ENCODE measurements at regions of chr17 and their contacts with region 1.

Region 1: GRCh38 chr17:79839363-79840268 is at the start of gene CBX4:
- DNase-seq: peak; percentile 82
- H3K4me3 ChIP-seq: peak within 1 kb of the TSS; percentile 71 to 89 (median 89)
- H3K27ac ChIP-seq: no peak within 1 kb of the TSS
- H3K4me1 ChIP-seq: peaks cover 18% of the 10 kb centered on the region
- H3K27me3 ChIP-seq: peaks cover 28 to 42% of the 10 kb centered on the region in 2 experiments
- CTCF ChIP-seq: peak; percentile 56 to 63
- POLR2A ChIP-seq: peak; percentile 86
- total RNA-seq, gene CBX4: 12.3 TPM in 2 replicates

Region 2: DNA sequence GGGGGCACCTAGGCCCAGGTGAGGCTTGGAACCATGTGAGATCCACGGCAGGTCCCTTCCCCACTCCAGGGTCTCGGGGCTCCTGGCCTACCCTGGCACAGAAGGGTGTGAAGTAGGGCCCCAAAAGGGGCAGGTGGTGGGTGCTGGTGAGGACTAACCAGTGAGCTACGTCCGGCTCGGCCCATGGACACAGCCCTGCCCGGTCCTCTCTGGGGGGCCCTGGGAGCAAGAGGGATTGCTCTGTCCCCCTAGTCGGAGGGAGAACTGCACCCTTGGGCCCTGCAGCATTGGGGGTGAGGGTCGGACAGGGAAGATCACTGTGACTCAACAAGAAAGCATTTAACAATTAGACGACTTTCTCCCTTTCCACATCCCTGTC is 105.9 kb before region 1 on chr17:
- CTCF ChIA-PET with region 1: no interaction called
- POLR2A ChIA-PET with region 1: no interaction called
- dilution Hi-C with region 1: no loop called
- intact Hi-C with region 1: no loop called
- DNase-seq: no peak
- H3K4me3 ChIP-seq: no peak overlapping the region
- H3K27ac ChIP-seq: no peak overlapping the region
- H3K4me1 ChIP-seq: peaks cover 7% of the 10 kb centered on the region
- H3K27me3 ChIP-seq: no peaks in the 10 kb centered on the region
- CTCF ChIP-seq: no peak
- POLR2A ChIP-seq: no peak

Region 3: DNA sequence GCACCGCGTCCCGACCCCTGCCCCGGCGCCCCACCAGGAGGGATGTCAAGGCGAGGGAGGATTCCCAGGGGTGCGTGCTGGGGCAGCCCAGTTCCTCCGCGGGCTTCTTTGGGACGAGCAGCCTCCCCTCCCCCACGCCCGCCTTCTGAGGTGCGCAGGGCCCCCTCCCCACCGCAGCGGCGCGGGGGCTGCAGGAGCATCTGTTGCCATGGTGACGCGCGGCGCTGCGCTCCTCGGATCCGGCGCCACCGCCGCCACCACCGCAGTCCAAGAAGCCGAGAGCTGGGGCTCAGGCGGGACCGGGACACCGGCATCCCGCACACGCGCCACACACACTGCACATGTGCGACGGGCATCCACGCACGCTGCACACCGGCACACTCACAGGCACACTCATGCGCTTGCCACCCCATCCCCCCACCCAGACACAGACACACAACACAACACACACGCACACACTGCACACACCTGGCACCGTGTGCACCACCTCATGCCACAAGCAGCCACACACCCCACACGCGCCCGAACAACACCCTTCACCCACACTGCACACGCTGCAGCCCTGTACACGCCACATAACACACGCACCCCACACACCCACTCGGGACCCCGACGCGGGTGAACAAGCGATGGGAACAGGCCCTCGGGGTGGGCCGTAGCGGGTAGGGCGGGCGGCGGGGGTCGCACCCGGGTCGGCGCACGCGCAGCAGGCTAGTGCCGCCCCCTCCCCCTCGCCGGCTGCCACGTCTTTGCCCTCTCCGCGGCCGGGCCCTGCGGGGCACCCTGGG is 91.9 kb before region 1 on chr17:
- CTCF ChIA-PET with region 1: interaction called, 14 read pairs
- POLR2A ChIA-PET with region 1: no interaction called
- dilution Hi-C with region 1: no loop called
- intact Hi-C with region 1: loop called (anchors 1 kb)
- DNase-seq: no peak
- H3K4me3 ChIP-seq: no peak overlapping the region
- H3K27ac ChIP-seq: no peak overlapping the region
- H3K4me1 ChIP-seq: no peaks in the 10 kb centered on the region
- H3K27me3 ChIP-seq: peaks cover 27 to 45% of the 10 kb centered on the region in 2 experiments
- CTCF ChIP-seq: no peak
- POLR2A ChIP-seq: no peak

Region 4: GRCh38 chr17:79796763-79797491 is 42.7 kb before region 1 on chr17 and contains the start of gene CBX8:
- CTCF ChIA-PET with region 1: interaction called, 19 read pairs
- POLR2A ChIA-PET with region 1: interaction called, 6 read pairs
- dilution Hi-C with region 1: no loop called
- intact Hi-C with region 1: loop called (anchors 2 kb)
- DNase-seq: peak; percentile 99
- H3K4me3 ChIP-seq: peak within 1 kb of the TSS; percentile 41 to 79 (median 43)
- H3K27ac ChIP-seq: peak within 1 kb of the TSS; percentile 36
- H3K4me1 ChIP-seq: peaks cover 19% of the 10 kb centered on the region
- H3K27me3 ChIP-seq: peaks cover 40 to 60% of the 10 kb centered on the region in 2 experiments
- CTCF ChIP-seq: no peak
- POLR2A ChIP-seq: peak; percentile 53
- total RNA-seq, gene CBX8: 3.1 TPM in 2 replicates

Region 5: GRCh38 chr17:79818026-79818758 is 21.4 kb before region 1 on chr17:
- CTCF ChIA-PET with region 1: interaction called, 59 read pairs
- POLR2A ChIA-PET with region 1: interaction called, 6 read pairs
- dilution Hi-C with region 1: no loop called
- intact Hi-C with region 1: no loop called
- DNase-seq: no peak
- H3K4me3 ChIP-seq: no peak overlapping the region
- H3K27ac ChIP-seq: no peak overlapping the region
- H3K4me1 ChIP-seq: peaks cover 3% of the 10 kb centered on the region
- H3K27me3 ChIP-seq: peaks cover 40 to 56% of the 10 kb centered on the region in 2 experiments
- CTCF ChIP-seq: no peak
- POLR2A ChIP-seq: no peak

Region 6: DNA sequence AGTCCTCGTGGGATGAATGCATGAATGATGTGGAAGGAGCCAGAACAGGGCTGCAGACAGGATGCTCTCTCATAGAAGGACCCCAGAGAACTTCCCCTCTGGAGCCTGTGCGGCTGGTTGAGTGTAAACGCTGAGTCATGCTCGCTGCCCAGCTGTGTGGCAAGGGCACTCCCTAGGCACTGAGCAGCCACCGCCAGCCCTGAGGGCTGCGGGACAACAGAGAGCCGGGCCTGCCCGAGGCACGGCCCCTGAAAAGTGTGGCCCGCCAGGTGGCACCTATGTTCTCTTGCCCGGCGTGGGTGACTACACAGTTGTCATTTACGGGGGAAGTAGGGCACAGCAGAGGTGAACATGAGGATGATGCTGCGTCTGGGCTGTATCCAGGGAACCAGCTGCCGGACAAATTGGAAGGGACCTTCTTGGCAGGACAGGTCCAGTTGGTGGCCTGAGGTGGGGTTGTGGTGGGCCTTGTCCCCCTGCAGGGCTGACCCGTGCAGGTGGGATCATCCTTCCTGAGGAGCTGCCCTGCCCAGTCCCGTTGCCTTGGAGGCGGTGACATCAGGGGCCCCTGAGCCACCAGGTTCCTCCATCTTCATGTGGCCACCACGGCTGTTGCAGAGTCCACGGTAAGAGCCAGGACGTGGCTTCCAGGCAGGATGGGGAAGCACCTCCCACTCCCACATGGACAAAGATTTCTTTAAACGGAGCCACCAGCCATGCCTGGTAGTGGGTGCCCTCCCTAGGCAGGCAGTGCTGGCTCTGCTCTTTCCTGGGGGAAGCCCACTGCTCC is 94.4 kb after region 1 on chr17:
- CTCF ChIA-PET with region 1: interaction called, 3 read pairs
- POLR2A ChIA-PET with region 1: no interaction called
- dilution Hi-C with region 1: no loop called
- intact Hi-C with region 1: loop called (anchors 5 kb)
- DNase-seq: peak; percentile 68
- H3K4me3 ChIP-seq: no peak overlapping the region
- H3K27ac ChIP-seq: peak overlapping the region; percentile 4
- H3K4me1 ChIP-seq: peaks cover 12% of the 10 kb centered on the region
- H3K27me3 ChIP-seq: peaks cover 2 to 5% of the 10 kb centered on the region in 2 experiments
- CTCF ChIP-seq: no peak
- POLR2A ChIP-seq: no peak